Common myeloid progenitor, CD34-positive (primary cell): ENCODE measurements at regions of chr12 and their contacts with region 1.

Region 1: DNA sequence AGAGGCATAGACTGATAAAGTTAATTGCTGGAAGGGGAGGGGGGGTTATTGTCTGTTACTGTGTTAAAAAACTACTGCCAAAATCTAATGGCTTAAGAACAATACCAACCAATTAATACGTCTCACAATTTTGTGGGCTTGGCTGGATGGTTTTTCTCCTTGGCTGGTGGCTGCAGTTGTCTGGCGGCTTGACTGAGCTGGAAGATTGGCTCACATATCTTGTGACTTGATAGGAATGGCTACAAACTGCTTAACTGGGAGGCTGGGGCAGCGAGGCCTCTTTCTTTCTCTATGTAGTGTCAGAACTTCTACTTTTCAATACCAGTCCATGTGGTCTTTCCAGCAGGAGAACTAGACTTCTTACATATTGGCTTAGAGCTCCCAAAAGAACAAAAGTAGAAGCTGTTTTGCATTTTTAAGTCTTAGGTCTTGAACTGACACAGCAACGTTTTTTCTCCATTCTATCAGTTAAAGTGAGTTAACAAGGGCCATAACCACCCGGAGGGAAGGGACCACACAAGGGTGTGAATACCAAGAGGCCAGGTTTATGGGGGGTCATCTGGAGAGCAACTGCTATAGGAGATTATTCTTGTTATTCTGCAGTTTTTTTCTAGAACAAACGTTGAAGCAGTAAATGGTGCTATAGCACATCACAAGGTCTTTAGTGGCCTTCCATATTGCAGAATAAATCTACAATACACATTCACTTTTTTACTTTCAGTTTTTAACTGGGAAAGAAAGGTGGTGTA is 46.9 kb downstream of the ZDHHC17 start:
- DNase-seq: no peak
- H3K4me3 ChIP-seq: no peak overlapping the region
- H3K27ac ChIP-seq: no peak overlapping the region
- H3K4me1 ChIP-seq: no peaks in the 10 kb centered on the region
- H3K27me3 ChIP-seq: no peaks in the 10 kb centered on the region

Region 2: DNA sequence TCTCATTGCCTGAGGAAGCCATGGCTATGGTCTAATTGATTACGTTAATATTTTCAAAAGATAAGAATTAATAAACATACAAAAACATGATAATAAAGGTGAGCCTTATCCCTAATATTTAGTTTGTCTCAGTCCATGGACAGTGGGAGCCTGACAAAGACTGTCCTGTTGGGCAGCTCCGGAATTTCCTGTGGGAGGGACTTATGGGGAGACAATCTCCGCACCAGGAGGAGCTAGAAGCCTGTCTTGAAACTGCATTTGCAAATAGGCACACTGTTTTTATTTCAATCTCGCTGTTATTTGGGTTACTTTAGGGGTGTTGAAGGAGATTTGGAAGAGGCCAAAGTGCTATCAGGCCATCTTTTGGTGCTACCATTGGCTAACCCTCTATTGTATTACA is 97.7 kb before region 1 on chr12:
- CTCF ChIA-PET with region 1: no interaction called
- POLR2A ChIA-PET with region 1: no interaction called
- DNase-seq: no peak
- H3K4me3 ChIP-seq: no peak overlapping the region
- H3K27ac ChIP-seq: no peak overlapping the region
- H3K4me1 ChIP-seq: peaks cover 0 to 2% (median 0%) of the 10 kb centered on the region in 4 experiments
- H3K27me3 ChIP-seq: no peaks in the 10 kb centered on the region

Region 3: GRCh38 chr12:76820888-76821482 is 10.1 kb after region 1 on chr12:
- CTCF ChIA-PET with region 1: interaction called, 11 read pairs
- POLR2A ChIA-PET with region 1: no interaction called
- DNase-seq: peak in 1 of 3 donors; percentile 10
- H3K4me3 ChIP-seq: no peak overlapping the region
- H3K27ac ChIP-seq: no peak overlapping the region
- H3K4me1 ChIP-seq: no peaks in the 10 kb centered on the region
- H3K27me3 ChIP-seq: no peaks in the 10 kb centered on the region